Dendritic cell treated with granulocyte-macrophage colony-stimulating factor and Interleukin-4, amounts not matched to agents 40 ng/mL and 50 ng/mL, for 4 days (primary cell): ENCODE measurements at regions of chr15 and their contacts with region 1.

Region 1: GRCh38 chr15:33074942-33075341 is 119.6 kb downstream of the FMN1 start:
- H3K4me3 Mint-ChIP-seq: no peak overlapping the region
- H3K27ac Mint-ChIP-seq: no peak overlapping the region
- H3K4me1 Mint-ChIP-seq: no peaks in the 10 kb centered on the region
- H3K27me3 Mint-ChIP-seq: peaks cover 4% of the 10 kb centered on the region

Region 2: GRCh38 chr15:32979710-32980109 is 95.2 kb before region 1 on chr15:
- intact Hi-C with region 1: no loop called
- H3K4me3 Mint-ChIP-seq: no peak overlapping the region
- H3K27ac Mint-ChIP-seq: no peak overlapping the region
- H3K4me1 Mint-ChIP-seq: no peaks in the 10 kb centered on the region
- H3K27me3 Mint-ChIP-seq: peaks cover 6% of the 10 kb centered on the region

Region 3: GRCh38 chr15:33021806-33022389 is 53.0 kb before region 1 on chr15:
- intact Hi-C with region 1: loop called (anchors 5 kb)
- H3K4me3 Mint-ChIP-seq: no peak overlapping the region
- H3K27ac Mint-ChIP-seq: peak overlapping the region; percentile 74
- H3K4me1 Mint-ChIP-seq: peaks cover 10% of the 10 kb centered on the region
- H3K27me3 Mint-ChIP-seq: no peaks in the 10 kb centered on the region

Region 4: GRCh38 chr15:33201491-33202231 is 126.7 kb after region 1 on chr15:
- intact Hi-C with region 1: loop called (anchors 10 kb)
- H3K4me3 Mint-ChIP-seq: peak overlapping the region; percentile 75
- H3K27ac Mint-ChIP-seq: peak overlapping the region; percentile 85
- H3K4me1 Mint-ChIP-seq: peaks cover 10% of the 10 kb centered on the region
- H3K27me3 Mint-ChIP-seq: peaks cover 8% of the 10 kb centered on the region